IMR-90 (cell line): ENCODE measurements at regions of chr2 and their contacts with region 1.

Region 1: DNA sequence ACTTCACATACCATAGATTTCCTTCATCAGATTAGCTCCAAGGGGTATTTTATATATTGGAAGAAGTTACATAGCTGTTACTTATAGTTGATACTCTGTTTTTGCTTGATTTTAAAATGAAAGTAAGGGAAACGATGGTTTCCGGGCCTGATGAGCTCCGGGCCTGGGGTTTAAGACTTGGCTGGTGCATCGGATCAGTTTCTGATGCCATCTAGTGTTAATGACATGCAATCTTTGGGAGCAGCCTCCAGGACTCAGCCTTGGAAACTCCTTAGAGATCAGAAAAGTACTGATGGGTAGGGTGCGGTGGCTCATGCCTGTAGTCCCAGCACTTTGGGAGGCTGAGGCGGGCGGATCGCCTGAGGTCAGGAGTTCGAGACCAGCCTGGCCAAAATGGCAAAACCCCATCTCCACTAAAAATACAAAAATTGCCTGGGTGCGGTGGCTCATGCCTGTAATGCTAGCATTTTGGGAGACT is 47.1 kb upstream of the CNOT11 start:
- DNase-seq: peak; percentile 80
- ATAC-seq: peak; percentile 99
- H3K4me3 ChIP-seq: no peak overlapping the region
- H3K27ac ChIP-seq: no peak overlapping the region
- H3K4me1 ChIP-seq: no peaks in the 10 kb centered on the region; the same call in 1 of the 2 replicates
- H3K27me3 ChIP-seq: no peaks in the 10 kb centered on the region
- CTCF ChIP-seq: peak; percentile 77
- POLR2A ChIP-seq: no peak
- RAD21 ChIP-seq: peak; percentile 75

Region 2: GRCh38 chr2:100721693-100722092 is 483.9 kb before region 1 on chr2:
- CTCF ChIA-PET with region 1: no interaction called
- POLR2A ChIA-PET with region 1: no interaction called
- dilution Hi-C with region 1: no loop called
- in situ Hi-C with region 1: no loop called
- intact Hi-C with region 1: loop called (anchors 10 kb)
- DNase-seq: no peak
- ATAC-seq: no peak
- H3K4me3 ChIP-seq: no peak overlapping the region
- H3K27ac ChIP-seq: no peak overlapping the region
- H3K4me1 ChIP-seq: no peaks in the 10 kb centered on the region
- H3K27me3 ChIP-seq: peaks cover 49% of the 10 kb centered on the region
- CTCF ChIP-seq: no peak
- POLR2A ChIP-seq: no peak
- RAD21 ChIP-seq: no peak

Region 3: GRCh38 chr2:101272045-101272784 is 66.7 kb after region 1 on chr2:
- CTCF ChIA-PET with region 1: no interaction called
- POLR2A ChIA-PET with region 1: no interaction called
- dilution Hi-C with region 1: no loop called
- in situ Hi-C with region 1: no loop called
- intact Hi-C with region 1: no loop called
- DNase-seq: no peak
- ATAC-seq: no peak
- H3K4me3 ChIP-seq: no peak overlapping the region
- H3K27ac ChIP-seq: no peak overlapping the region
- H3K4me1 ChIP-seq: no peaks in the 10 kb centered on the region
- H3K27me3 ChIP-seq: no peaks in the 10 kb centered on the region
- CTCF ChIP-seq: no peak
- POLR2A ChIP-seq: no peak
- RAD21 ChIP-seq: no peak